ENCODE measurements at regions of chr13 and their contacts with region 1.

Region 1: GRCh38 chr13:64551755-64552154 is 2678.4 kb downstream of the PCDH9 start:
- DNase-seq: no peak
- ATAC-seq: no peak
- H3K4me3 ChIP-seq: no peak overlapping the region
- H3K27ac ChIP-seq: no peak overlapping the region
- H3K4me1 ChIP-seq: no peaks in the 10 kb centered on the region
- H3K27me3 ChIP-seq: no peaks in the 10 kb centered on the region
- CTCF ChIP-seq: no peak
- POLR2A ChIP-seq: no peak

Region 2: GRCh38 chr13:63507021-63507420 is 1044.7 kb before region 1 on chr13:
- in situ Hi-C with region 1: no loop called
- intact Hi-C with region 1: loop called (anchors 5 kb)
- DNase-seq: no peak
- ATAC-seq: no peak
- H3K4me3 ChIP-seq: no peak overlapping the region
- H3K27ac ChIP-seq: no peak overlapping the region
- H3K4me1 ChIP-seq: no peaks in the 10 kb centered on the region
- H3K27me3 ChIP-seq: no peaks in the 10 kb centered on the region
- CTCF ChIP-seq: no peak
- POLR2A ChIP-seq: no peak

Measured in gastrocnemius medialis (tissue), 4 donors.